ENCODE measurements at regions of chr11 and their contacts with region 1.

Region 1: DNA sequence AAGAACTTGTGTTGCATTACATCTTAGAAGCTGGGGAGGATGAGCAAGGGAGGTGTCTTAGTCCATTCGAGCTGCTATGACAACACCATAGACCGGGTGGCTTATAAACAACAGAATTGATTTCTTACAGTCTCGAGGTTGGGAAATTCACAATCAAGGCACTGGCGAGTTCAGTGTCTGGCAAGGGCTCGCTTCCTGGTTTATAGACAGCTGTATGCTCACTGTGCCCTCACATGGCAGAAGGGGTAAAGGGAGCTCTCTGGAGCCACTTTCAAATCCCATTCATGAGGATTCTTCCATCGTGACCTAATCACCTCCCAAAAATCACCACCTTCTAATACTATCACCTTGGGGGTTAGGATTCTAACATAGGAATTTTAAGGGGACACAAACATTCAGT is 150.0 kb upstream of the NECTIN1 start:
- DNase-seq: no peak
- H3K4me3 ChIP-seq: no peak overlapping the region
- H3K27ac ChIP-seq: no peak overlapping the region
- H3K4me1 ChIP-seq: no peaks in the 10 kb centered on the region
- H3K27me3 ChIP-seq: no peaks in the 10 kb centered on the region
- CTCF ChIP-seq: no peak
- POLR2A ChIP-seq: no peak

Region 2: DNA sequence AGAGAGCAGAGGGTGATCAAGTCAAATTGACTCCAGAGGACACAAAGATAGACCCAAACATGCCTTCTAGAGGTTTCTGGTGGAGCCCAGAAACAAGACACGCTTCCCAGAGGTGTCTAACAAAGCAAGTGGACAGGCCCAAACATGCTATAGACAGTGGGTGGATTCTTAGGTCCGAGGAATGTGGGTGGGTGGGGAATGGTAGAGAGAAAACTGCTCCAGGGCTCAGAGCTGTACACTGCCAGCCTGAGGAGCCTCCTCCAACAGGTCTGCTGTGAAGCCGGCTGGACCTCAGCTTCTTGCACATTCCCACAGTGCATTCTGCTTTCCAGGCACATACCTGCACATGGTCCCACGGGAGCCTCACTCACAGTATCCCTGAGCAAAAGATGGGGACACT is 33.2 kb before region 1 on chr11:
- intact Hi-C with region 1: loop called (anchors 2 kb)
- DNase-seq: peak in 1 of 2 donors; percentile 82
- H3K4me3 ChIP-seq: no peak overlapping the region
- H3K27ac ChIP-seq: peak overlapping the region; percentile 68 to 76
- H3K4me1 ChIP-seq: no peaks in the 10 kb centered on the region
- H3K27me3 ChIP-seq: peaks cover 0 to 8% of the 10 kb centered on the region in 2 donors
- CTCF ChIP-seq: no peak
- POLR2A ChIP-seq: no peak

Region 3: GRCh38 chr11:120096369-120097191 is 217.6 kb after region 1 on chr11:
- intact Hi-C with region 1: loop called (anchors 5 kb)
- DNase-seq: no peak
- H3K4me3 ChIP-seq: no peak overlapping the region
- H3K27ac ChIP-seq: no peak overlapping the region
- H3K4me1 ChIP-seq: no peaks in the 10 kb centered on the region
- H3K27me3 ChIP-seq: peaks cover 0 to 3% of the 10 kb centered on the region in 2 donors
- CTCF ChIP-seq: no peak
- POLR2A ChIP-seq: no peak

Measured in breast epithelium (tissue), 4 donors.